ENCODE measurements at regions of chrX and their contacts with region 1.

Region 1: GRCh38 chrX:57406149-57406548 is 119.6 kb downstream of the FAAH2 start:
- DNase-seq: no peak
- H3K4me3 ChIP-seq: no peak overlapping the region
- H3K27ac ChIP-seq: no peak overlapping the region
- H3K4me1 ChIP-seq: no peaks in the 10 kb centered on the region
- H3K27me3 ChIP-seq: no peaks in the 10 kb centered on the region
- CTCF ChIP-seq: no peak

Region 2: DNA sequence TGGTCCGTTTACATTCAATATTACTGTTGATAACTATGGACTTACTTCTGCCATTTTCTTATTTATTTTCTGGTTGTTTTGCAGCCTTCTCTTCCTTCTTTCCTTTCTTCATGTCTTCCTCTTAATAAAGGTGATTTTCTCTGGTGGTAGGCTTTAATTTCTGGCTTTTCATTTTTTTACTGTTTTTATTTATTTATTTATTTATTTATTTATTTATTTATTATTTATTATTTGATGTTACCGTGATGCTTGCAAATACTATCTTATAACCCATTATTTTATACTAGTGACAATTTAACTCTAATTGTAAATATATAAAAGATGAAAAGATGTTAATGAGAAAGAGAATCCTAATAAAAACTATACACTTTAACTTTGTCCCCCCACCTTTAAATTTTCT is 523.6 kb before region 1 on chrX:
- intact Hi-C with region 1: no loop called
- DNase-seq: no peak
- H3K4me3 ChIP-seq: no peak overlapping the region
- H3K27ac ChIP-seq: no peak overlapping the region
- H3K4me1 ChIP-seq: no peaks in the 10 kb centered on the region
- H3K27me3 ChIP-seq: no peaks in the 10 kb centered on the region
- CTCF ChIP-seq: no peak

Region 3: GRCh38 chrX:57353472-57354132 is 52.5 kb before region 1 on chrX:
- intact Hi-C with region 1: loop called (anchors 10 kb)
- DNase-seq: no peak
- H3K4me3 ChIP-seq: no peak overlapping the region
- H3K27ac ChIP-seq: no peak overlapping the region
- H3K4me1 ChIP-seq: no peaks in the 10 kb centered on the region
- H3K27me3 ChIP-seq: no peaks in the 10 kb centered on the region
- CTCF ChIP-seq: no peak

Measured in colonic mucosa (tissue), 4 donors.